Panc1 (cell line): ENCODE measurements at regions of chr18 and their contacts with region 1.

Region 1: DNA sequence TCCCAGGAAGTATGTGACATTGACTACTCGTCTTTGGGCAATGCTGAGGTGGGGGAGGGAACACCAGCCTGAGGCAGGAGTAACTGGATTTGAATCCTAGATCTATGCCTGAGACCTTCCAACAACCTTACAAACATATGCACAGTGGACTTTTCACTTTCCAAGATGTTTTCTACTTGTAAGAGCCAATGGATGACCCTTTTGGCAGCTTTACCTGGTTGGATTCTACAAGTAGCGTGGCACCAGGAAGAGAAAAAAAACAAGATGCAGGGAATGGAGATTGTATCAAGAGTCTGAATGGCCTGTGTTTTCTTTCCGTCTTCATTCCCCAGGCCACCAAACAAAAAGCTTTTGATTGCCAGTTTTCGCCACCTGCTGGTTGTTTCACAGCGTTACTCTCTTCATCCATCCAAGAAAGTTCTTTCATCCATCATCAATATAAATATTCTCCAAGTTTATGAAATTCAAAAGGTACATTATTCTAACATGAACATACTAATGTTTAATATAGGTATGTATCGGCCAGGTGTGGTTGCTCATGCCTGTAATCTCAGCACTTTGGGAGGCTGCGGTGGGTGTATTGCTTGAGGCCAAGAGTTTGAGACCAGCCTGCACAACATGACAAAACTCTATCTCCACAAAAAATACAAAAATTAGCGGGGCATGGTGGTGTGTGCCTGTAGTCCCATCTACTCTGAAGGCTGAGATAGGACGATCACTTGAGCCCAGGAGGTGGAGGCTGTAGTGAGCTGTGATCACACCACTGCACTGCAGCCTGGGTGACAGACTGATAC is 3.5 kb upstream of the BCL2 start:
- DNase-seq: peak; percentile 32
- ATAC-seq: no peak
- H3K4me3 ChIP-seq: no peak overlapping the region
- H3K27ac ChIP-seq: no peak overlapping the region
- H3K4me1 ChIP-seq: peaks cover 6% of the 10 kb centered on the region; the same call in 1 of the 2 replicates
- H3K27me3 ChIP-seq: peaks cover 9% of the 10 kb centered on the region
- CTCF ChIP-seq: peak; percentile 68

Region 2: GRCh38 chr18:63131106-63131958 is 191.7 kb before region 1 on chr18:
- CTCF ChIA-PET with region 1: no interaction called
- POLR2A ChIA-PET with region 1: no interaction called
- in situ Hi-C with region 1: no loop called
- intact Hi-C with region 1: loop called (anchors 2 kb)
- DNase-seq: no peak
- ATAC-seq: no peak
- H3K4me3 ChIP-seq: no peak overlapping the region
- H3K27ac ChIP-seq: no peak overlapping the region
- H3K4me1 ChIP-seq: no peaks in the 10 kb centered on the region
- H3K27me3 ChIP-seq: no peaks in the 10 kb centered on the region
- CTCF ChIP-seq: peak; percentile 57

Region 3: DNA sequence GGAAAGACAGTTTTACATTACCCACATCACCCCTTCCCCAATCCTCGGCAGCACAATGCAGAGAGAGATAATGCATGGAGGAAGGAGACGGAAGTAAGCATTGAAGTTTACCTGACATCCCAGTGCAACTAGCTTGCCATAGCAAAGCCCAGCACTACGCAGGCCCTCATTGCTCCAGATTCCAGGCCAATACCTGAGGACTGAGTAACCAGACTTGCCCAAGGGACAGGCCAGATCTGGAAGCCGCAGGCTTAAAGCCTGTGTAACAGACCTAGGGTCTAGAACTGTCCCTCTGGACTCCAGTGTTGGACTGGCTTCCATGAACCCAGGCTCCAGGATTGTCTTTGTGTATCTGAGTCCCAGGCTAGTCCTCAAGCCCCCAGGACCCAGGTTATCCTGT is 303.4 kb after region 1 on chr18:
- CTCF ChIA-PET with region 1: no interaction called
- POLR2A ChIA-PET with region 1: no interaction called
- in situ Hi-C with region 1: no loop called
- intact Hi-C with region 1: no loop called
- DNase-seq: no peak
- ATAC-seq: no peak
- H3K4me3 ChIP-seq: no peak overlapping the region
- H3K27ac ChIP-seq: no peak overlapping the region
- H3K4me1 ChIP-seq: no peaks in the 10 kb centered on the region
- H3K27me3 ChIP-seq: no peaks in the 10 kb centered on the region
- CTCF ChIP-seq: no peak